AG04449 (cell line): ENCODE measurements at regions of chr4 and their contacts with region 1.

Region 1: GRCh38 chr4:82900331-82901128 is at the start of gene THAP9:
- DNase-seq: peak; percentile 97
- H3K4me3 ChIP-seq: peak within 1 kb of the TSS; percentile 82
- CTCF ChIP-seq: no peak

Region 2: DNA sequence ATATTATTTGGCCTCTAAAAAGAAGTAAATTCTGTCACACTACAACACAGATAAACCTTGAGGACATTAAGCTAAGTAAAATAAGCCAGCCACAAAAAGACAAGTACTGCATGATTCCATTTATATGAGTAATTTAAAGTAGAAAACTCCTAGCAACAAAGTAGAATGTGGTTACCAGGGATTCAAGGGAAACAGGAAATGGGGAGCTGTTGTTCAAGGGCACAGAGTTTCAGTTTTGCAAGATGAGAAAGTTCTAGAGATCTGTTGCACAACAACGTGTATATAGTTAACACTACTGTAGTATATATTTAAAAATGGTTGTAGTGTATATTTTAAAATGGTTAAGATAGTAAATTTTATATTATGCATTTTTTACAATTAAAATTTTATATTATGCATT is 34.9 kb before region 1 on chr4:
- CTCF ChIA-PET with region 1: no interaction called
- POLR2A ChIA-PET with region 1: no interaction called
- DNase-seq: peak; percentile 76
- H3K4me3 ChIP-seq: no peak overlapping the region
- CTCF ChIP-seq: no peak

Region 3: DNA sequence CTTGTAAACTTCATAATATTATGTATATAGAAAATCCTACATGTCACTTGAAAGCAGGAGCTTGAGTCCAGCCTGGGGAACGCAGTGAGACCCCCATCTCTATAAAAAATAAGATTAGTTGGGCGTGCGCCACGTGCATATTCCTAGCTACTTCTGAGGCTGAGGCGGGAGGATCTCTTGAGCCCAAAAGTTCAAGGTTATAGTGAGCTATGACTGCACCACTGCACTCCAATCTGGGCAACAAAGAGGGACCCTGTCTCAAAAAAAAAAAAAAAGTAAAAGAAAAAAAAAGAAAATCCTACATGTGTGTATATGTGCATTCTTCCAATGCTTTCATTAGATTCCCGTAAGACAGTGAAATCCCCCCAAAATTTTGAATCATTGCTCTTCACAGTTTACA is 11.2 kb before region 1 on chr4:
- CTCF ChIA-PET with region 1: interaction called, 5 read pairs
- POLR2A ChIA-PET with region 1: interaction called, 10 read pairs
- DNase-seq: no peak
- H3K4me3 ChIP-seq: peak overlapping the region; percentile 89
- CTCF ChIP-seq: no peak

Region 4: DNA sequence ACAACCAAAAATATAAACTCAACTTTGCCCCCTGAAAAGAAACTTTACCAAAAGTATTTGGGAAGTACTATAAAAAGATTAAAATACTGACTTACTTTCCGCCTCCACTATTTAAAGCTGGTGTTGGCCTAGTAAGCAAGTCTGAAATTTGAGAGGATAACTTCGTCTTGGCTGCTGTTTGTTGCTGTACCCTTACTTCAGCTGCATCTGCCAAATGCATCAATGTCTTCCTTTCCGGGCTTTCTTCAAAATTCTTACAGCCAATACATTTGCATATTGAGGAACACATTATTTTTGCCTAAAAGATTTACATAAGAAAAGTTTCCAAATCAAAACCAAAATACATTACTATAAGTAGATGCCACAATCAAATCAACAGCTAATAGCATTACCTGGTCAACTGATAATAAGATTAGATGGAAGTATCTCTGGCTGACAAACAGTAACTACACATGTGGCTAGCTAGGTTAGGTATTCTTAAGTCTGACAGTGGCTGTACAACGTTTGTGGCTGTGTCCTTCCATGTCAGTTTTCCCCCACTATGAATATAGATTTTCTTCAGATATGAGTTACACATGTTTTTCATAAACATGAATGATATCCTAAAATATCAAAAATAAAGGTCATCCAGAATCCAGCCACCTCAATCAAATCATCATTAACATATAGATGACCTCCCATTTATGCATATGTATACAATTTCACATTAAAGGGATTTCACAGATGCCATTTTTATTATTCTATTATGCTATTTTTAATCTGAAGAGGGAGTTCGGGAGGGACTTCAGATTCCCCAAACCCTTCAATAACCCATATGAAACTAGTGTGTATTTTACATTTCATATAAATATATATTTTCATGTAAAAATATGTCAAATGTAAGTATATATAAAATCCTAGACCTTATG is 30.6 kb after region 1 on chr4:
- CTCF ChIA-PET with region 1: no interaction called
- POLR2A ChIA-PET with region 1: no interaction called
- DNase-seq: no peak
- H3K4me3 ChIP-seq: no peak overlapping the region
- CTCF ChIP-seq: no peak

Region 5: DNA sequence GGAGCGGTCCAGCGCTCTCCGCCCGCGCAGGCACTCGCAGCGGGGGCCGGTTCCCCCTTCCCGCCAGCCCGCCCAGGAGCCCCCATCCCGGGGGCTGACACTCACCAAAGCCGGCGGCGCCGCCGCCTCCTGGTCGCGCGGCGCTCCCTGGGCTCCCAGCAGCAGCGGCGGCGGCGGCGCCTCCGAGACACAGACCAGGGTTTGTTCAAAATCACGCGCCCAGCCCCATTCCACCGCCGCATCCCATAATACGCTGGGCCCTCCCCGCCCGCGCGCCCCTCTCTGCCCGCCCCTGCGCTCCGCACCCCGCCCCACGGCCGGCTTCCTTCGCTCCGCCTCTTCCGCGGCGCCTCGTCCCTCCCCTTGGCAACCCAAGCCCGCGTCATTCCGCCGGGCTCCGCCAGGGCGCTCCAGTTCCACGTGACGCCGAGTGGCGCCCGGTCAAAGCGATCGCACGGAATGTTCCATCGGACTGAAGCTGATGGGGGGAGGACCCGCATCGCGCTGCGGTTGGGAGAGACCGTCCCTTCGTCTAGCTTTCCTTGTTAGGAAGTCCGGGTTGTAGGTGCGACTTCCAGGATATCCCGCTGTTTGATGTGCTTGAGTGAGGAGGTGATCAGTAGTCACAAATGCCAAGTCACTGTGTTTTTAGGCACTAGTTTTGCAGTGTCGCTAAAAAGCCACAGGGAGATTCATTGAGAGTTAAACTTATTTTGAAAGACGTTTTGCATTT is 112.3 kb after region 1 on chr4:
- CTCF ChIA-PET with region 1: interaction called, 8 read pairs
- POLR2A ChIA-PET with region 1: interaction called, 13 read pairs
- DNase-seq: peak; percentile 79
- H3K4me3 ChIP-seq: peak overlapping the region; percentile 76
- CTCF ChIP-seq: peak; percentile 67